ENCODE measurements at regions of chr5 and their contacts with region 1.

Region 1: GRCh38 chr5:64634997-64635686 is 55.2 kb upstream of the SHISAL2B start:
- DNase-seq: no peak
- H3K4me3 ChIP-seq: no peak overlapping the region
- H3K27ac ChIP-seq: no peak overlapping the region
- H3K27me3 ChIP-seq: no peaks in the 10 kb centered on the region
- CTCF ChIP-seq: peak; percentile 38

Region 2: DNA sequence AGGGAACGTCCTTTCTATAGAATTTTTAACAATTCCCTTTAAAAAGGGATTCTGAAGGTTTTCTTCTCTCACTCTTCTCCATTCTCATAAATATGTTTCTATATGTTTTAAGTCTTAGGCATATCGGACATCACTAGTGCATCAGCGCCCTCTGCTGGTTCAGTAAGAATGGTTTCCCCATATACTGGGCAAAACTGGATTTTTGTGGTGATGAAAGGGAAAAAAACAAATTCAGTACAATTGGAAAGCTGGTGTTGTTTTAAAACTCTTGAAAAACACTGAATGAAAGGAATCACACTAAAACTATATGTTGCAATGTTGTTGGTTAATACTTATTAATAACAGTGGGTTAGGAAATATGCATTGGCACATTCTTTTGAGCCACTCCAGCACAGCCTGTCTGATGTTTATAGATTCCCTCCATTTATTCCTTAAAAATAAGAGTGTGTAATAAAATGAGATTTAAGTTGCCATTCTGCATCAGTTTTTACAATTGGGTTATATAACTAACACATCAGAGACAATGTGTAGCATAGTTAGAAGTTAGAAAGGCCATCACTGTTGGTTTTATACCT is 149.4 kb after region 1 on chr5:
- in situ Hi-C with region 1: loop called (anchors 25 kb)
- DNase-seq: peak; percentile 79
- H3K4me3 ChIP-seq: no peak overlapping the region
- H3K27ac ChIP-seq: no peak overlapping the region
- H3K27me3 ChIP-seq: no peaks in the 10 kb centered on the region
- CTCF ChIP-seq: peak; percentile 78

Measured in brain microvascular endothelial cell (primary cell).